ENCODE measurements at regions of chr5 and their contacts with region 1.

Region 1: DNA sequence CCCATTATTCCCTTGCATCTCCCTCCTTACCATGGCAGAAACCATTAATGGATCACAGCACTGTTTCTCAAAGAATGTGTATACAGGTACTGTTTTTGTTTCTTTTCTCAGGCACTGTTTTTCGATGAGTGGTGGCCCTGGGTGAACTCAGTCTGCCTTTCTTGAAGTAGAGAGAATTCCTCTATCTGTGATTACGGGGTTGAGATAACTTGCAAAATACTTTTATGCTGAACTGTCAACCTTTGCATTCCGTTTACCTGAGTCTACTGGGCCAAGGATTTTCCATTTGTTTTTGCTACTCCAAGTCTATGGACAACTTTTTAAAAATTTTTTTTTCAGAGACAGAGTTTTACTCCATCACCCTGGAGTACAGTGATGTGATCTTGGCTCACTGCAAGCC is 82.7 kb upstream of the CLINT1 start:
- DNase-seq: no peak
- ATAC-seq: no peak

Region 2: GRCh38 chr5:157785801-157786200 is 155.8 kb before region 1 on chr5:
- intact Hi-C with region 1: no loop called
- DNase-seq: no peak
- ATAC-seq: no peak

Region 3: GRCh38 chr5:157820593-157821252 is 120.9 kb before region 1 on chr5:
- intact Hi-C with region 1: no loop called
- DNase-seq: no peak
- ATAC-seq: peak; percentile 62

Region 4: GRCh38 chr5:158670201-158670600 is 728.6 kb after region 1 on chr5:
- intact Hi-C with region 1: loop called (anchors 5 kb)
- DNase-seq: no peak
- ATAC-seq: peak; percentile 26

Measured in sciatic nerve (tissue), 2 donors.